Psoas muscle (tissue), 8 donors: ENCODE measurements at regions of chr14 and their contacts with region 1.

Region 1: GRCh38 chr14:77457522-77458290 is at the starts of genes AHSA1 and VIPAS39:
- DNase-seq: peak; percentile 93 to 96
- ATAC-seq: peak; percentile 97 to 99 (median 98)
- H3K4me3 ChIP-seq: peak within 1 kb of the TSS; percentile 99
- H3K27ac ChIP-seq: peak within 1 kb of the TSS; percentile 85
- H3K4me1 ChIP-seq: peaks cover 20% of the 10 kb centered on the region
- H3K27me3 ChIP-seq: no peaks in the 10 kb centered on the region
- CTCF ChIP-seq: no peak
- total RNA-seq, gene AHSA1: 180 to 271 (median 189) TPM
- total RNA-seq, gene VIPAS39: 9.6 to 13.5 (median 11.7) TPM

Region 2: DNA sequence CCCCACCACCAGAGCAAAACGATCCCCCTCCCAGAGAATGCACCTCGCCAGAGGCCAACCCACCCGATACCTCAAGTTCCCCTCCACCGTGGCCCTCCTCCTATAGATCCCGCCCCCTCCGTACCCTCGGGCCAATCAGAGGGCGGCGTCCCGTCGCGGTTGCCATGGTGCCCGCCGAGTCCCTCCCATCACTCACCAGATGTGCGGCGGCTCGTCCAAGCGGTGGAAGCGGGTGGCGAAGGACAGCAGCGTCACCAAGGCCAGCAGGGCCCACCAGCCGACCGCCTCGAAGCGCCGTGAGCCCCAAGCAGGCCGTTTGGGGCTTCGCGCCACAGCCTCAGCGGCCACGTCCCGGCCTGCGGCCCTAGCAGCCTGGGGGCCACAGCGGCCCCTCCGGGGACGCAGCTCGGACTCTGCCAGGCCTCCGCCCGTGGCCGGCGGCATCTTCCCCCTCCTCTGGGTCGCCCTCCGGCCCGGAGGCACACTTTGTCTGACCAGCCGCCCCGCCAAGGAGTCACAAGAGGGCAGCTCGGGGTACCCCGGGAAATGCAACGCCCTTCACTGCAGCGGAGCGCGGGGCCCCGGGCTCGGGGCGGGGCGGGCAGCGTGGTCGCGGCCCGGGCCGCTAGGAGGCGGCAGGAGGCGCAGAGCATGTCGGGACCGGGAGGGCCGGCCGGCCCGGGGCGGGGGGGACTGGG is 137.3 kb before region 1 on chr14 and contains the start of gene POMT2:
- intact Hi-C with region 1: loop called (anchors 5 to 10 kb)
- DNase-seq: peak; percentile 94 to 96
- ATAC-seq: peak; percentile 78 to 79 (median 78)
- H3K4me3 ChIP-seq: peak within 1 kb of the TSS; percentile 97
- H3K27ac ChIP-seq: peak within 1 kb of the TSS; percentile 98
- H3K4me1 ChIP-seq: peaks cover 51% of the 10 kb centered on the region
- H3K27me3 ChIP-seq: no peaks in the 10 kb centered on the region
- CTCF ChIP-seq: peak; percentile 42
- total RNA-seq, gene POMT2: 29.2 to 57.5 (median 36.7) TPM

Region 3: GRCh38 chr14:77376771-77377501 is 80.8 kb before region 1 on chr14 and contains the starts of genes SAMD15 and TMED8:
- intact Hi-C with region 1: loop called in 1 of 2 experiments (anchors 5 kb)
- DNase-seq: peak; percentile 85 to 93
- ATAC-seq: peak; percentile 98 to 100 (median 98)
- H3K4me3 ChIP-seq: peak within 1 kb of the TSS; percentile 92
- H3K27ac ChIP-seq: peak within 1 kb of the TSS; percentile 75
- H3K4me1 ChIP-seq: peaks cover 12% of the 10 kb centered on the region
- H3K27me3 ChIP-seq: no peaks in the 10 kb centered on the region
- CTCF ChIP-seq: peak; percentile 20
- total RNA-seq, gene SAMD15: 0.21 TPM in 1 of 4 donors, not detected in the others
- total RNA-seq, gene TMED8: 2.8 to 3.5 (median 3.1) TPM

Region 4: GRCh38 chr14:77478796-77479195 is 21.1 kb after region 1 on chr14:
- intact Hi-C with region 1: no loop called
- DNase-seq: no peak
- ATAC-seq: no peak
- H3K4me3 ChIP-seq: no peak overlapping the region
- H3K27ac ChIP-seq: no peak overlapping the region
- H3K4me1 ChIP-seq: no peaks in the 10 kb centered on the region
- H3K27me3 ChIP-seq: no peaks in the 10 kb centered on the region
- CTCF ChIP-seq: no peak

Region 5: DNA sequence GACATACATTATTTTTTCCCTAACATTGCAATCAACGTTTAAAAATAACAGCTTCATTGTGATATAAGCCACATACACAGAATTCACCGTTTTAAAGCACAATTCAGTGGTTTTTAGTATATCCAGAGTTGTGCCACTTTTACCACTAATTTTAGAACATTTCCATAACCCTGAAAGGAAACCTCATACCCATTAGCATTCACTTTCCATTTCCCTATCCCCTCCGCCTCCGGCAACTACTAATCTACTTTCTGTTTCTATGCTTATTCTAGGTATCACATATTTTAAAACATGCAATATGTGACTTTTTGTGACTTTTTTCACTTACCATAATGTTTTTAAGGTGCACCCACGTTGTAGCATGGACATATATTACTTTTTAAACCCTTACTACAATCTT is 96.5 kb after region 1 on chr14:
- intact Hi-C with region 1: loop called in 1 of 2 experiments (anchors 5 kb)
- DNase-seq: no peak
- ATAC-seq: no peak
- H3K4me3 ChIP-seq: no peak overlapping the region
- H3K27ac ChIP-seq: no peak overlapping the region
- H3K4me1 ChIP-seq: no peaks in the 10 kb centered on the region
- H3K27me3 ChIP-seq: no peaks in the 10 kb centered on the region
- CTCF ChIP-seq: no peak

Region 6: DNA sequence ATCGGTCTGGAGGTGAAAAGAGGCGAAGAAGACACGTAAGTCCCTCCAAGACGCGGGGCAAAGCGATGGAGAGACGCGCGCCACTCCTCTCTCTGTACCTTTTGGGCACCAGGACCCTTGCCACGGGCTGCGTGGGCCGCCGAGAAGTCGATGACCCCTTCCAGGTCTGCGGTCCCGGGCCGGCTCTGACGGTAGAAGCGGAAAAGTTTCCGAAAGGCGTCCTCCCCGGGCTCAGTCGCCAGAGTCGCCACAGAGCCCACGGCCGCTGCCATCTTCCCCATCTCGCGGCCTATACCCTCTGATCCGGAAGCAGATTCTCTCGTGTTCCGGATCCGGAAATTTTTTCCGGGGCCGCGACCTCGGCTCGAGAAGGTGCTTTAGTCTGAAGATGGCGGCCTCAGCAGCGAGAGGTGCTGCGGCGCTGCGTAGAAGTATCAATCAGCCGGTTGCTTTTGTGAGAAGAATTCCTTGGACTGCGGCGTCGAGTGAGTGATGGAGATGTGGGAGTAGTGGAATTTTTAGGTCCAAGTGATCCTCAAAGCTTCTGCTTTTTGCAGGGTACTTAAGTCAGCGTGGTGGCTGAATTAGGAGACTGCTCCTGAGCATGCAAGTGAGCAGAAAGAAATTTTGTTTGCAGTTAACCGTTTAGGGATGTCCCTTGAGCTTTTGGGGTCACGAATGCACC is 250.2 kb after region 1 on chr14 and contains the starts of genes ALKBH1 and SLIRP:
- intact Hi-C with region 1: loop called (anchors 5 kb)
- DNase-seq: peak; percentile 86 to 91
- ATAC-seq: peak; percentile 97 to 99 (median 98)
- H3K4me3 ChIP-seq: peak within 1 kb of the TSS; percentile 98
- H3K27ac ChIP-seq: peak within 1 kb of the TSS; percentile 74
- H3K4me1 ChIP-seq: peaks cover 25% of the 10 kb centered on the region
- H3K27me3 ChIP-seq: no peaks in the 10 kb centered on the region
- CTCF ChIP-seq: no peak
- total RNA-seq, gene ALKBH1: 7.7 to 14.9 (median 10.4) TPM
- total RNA-seq, gene SLIRP: 129 to 185 (median 143) TPM